CD4-positive, alpha-beta memory T cell (primary cell): ENCODE measurements at regions of chr2 and their contacts with region 1.

Region 1: DNA sequence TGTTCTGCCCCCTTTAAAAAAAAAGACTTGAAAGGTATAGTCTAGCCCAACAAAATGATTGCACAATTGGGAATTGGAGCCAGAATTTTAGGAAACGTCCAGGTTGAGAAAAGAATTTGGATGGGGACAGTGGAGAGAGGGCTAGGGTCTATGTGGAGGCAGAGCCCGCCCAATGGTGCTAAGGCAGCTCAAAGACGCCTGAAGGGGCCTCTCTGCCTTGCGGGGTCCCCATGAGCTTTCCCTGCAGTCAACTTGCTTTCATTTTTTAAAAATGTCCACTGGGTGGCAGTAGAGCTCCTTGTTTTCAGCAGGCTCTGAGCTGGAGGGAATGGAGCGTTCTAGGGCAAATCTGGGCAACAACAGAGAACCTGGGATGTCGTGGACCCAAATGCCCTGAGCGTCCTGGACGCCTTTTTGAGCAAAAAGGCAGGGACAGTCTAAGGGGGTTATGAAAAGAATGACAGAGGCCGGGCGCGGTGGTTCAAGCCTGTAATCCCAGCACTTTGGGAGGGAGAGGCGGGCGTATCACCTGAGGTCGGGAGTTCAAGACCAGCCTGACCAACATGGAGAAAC is 40.2 kb upstream of the ITM2C start:
- DNase-seq: peak; percentile 60 to 74 (median 71)
- H3K4me3 ChIP-seq: no peak overlapping the region
- H3K4me3 Mint-ChIP-seq: peak overlapping the region in 7 of 8 donors; percentile 35 to 69 (median 60)
- H3K27ac ChIP-seq: no peak overlapping the region
- H3K27ac Mint-ChIP-seq: peak overlapping the region in 1 of 7 donors; percentile 68
- H3K4me1 ChIP-seq: peaks cover 16% of the 10 kb centered on the region
- H3K4me1 Mint-ChIP-seq: peaks cover 2 to 13% (median 8%) of the 10 kb centered on the region in 4 donors
- H3K27me3 ChIP-seq: no peaks in the 10 kb centered on the region
- H3K27me3 Mint-ChIP-seq: peaks cover 22 to 23% of the 10 kb centered on the region in 2 donors

Region 2: GRCh38 chr2:230781130-230781797 is 43.2 kb before region 1 on chr2:
- CTCF ChIA-PET with region 1: interaction called, 13 read pairs
- POLR2A ChIA-PET with region 1: no interaction called
- intact Hi-C with region 1: no loop called
- DNase-seq: peak; percentile 59 to 83 (median 64)
- H3K4me3 ChIP-seq: no peak overlapping the region
- H3K4me3 Mint-ChIP-seq: peak overlapping the region in 6 of 8 donors; percentile 13 to 60 (median 34)
- H3K27ac ChIP-seq: peak overlapping the region; percentile 33
- H3K27ac Mint-ChIP-seq: peak overlapping the region; percentile 14 to 93 (median 64)
- H3K4me1 ChIP-seq: peaks cover 78% of the 10 kb centered on the region
- H3K4me1 Mint-ChIP-seq: peaks cover 60 to 81% (median 72%) of the 10 kb centered on the region in 4 donors
- H3K27me3 ChIP-seq: no peaks in the 10 kb centered on the region
- H3K27me3 Mint-ChIP-seq: no peaks in the 10 kb centered on the region

Region 3: DNA sequence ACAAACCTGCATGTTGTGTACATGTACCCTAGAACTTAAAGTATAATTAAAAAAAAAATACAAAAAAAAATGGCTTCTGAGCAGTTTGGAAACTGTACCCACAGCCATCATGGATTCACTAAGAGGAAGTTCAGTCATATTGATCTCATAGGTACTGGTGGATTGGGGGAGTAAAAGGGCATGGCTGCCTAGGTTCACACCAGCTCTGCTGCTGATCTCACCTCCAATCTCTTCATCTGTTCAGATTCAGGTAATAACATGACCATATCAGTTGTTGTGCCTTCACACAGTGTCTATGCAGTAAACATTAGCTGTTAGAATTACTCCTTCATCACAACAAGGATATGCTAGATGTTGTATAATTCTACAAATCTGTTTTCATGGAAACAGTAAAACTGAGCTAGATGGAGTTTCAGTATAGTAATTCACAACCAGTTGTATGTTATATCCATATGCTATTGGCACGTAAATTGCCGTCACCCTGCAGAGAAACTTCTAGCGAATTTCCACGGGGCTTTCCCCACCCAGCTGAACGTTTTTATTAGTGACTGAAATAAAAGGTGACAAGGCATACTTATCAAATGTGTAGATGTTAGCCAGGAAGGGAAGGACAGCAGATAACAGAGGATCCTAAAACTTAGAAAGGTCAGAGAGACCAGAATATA is 19.0 kb before region 1 on chr2:
- CTCF ChIA-PET with region 1: interaction called, 10 read pairs
- POLR2A ChIA-PET with region 1: interaction called, 3 read pairs
- intact Hi-C with region 1: no loop called
- DNase-seq: no peak
- H3K4me3 ChIP-seq: no peak overlapping the region
- H3K4me3 Mint-ChIP-seq: no peak overlapping the region
- H3K27ac ChIP-seq: no peak overlapping the region
- H3K27ac Mint-ChIP-seq: peak overlapping the region in 5 of 7 donors; percentile 1 to 80 (median 53)
- H3K4me1 ChIP-seq: no peaks in the 10 kb centered on the region
- H3K4me1 Mint-ChIP-seq: peaks cover 4 to 14% (median 11%) of the 10 kb centered on the region in 4 donors
- H3K27me3 ChIP-seq: no peaks in the 10 kb centered on the region
- H3K27me3 Mint-ChIP-seq: no peaks in the 10 kb centered on the region

Region 4: DNA sequence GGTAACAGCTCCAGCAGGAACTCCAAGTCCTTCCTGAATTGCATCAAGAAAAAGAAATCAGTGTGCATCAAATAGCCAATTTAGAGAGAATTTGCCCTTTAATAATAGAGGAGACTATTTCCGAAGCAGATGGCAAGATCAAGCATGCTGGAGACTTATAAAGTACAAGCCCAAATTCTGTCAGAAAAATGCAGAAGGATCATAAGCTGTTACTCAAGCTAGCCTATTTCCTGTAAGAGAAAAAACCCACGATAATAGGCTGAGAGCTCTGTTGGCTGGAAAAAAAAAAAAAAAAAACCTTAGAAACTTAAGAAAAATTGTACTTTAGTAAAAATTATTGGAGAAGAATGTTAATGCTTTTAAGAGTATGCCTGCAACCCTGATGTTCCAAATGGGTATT is 15.8 kb after region 1 on chr2:
- CTCF ChIA-PET with region 1: interaction called, 15 read pairs
- POLR2A ChIA-PET with region 1: no interaction called
- intact Hi-C with region 1: no loop called
- DNase-seq: no peak
- H3K4me3 ChIP-seq: no peak overlapping the region
- H3K4me3 Mint-ChIP-seq: no peak overlapping the region
- H3K27ac ChIP-seq: no peak overlapping the region
- H3K27ac Mint-ChIP-seq: no peak overlapping the region
- H3K4me1 ChIP-seq: no peaks in the 10 kb centered on the region
- H3K4me1 Mint-ChIP-seq: no peaks in the 10 kb centered on the region
- H3K27me3 ChIP-seq: no peaks in the 10 kb centered on the region
- H3K27me3 Mint-ChIP-seq: peaks cover 3 to 12% of the 10 kb centered on the region in 2 donors

Region 5: GRCh38 chr2:230847883-230848388 is 23.4 kb after region 1 on chr2:
- CTCF ChIA-PET with region 1: interaction called, 80 read pairs
- POLR2A ChIA-PET with region 1: interaction called, 3 read pairs
- intact Hi-C with region 1: no loop called
- DNase-seq: peak; percentile 74 to 82 (median 76)
- H3K4me3 ChIP-seq: no peak overlapping the region
- H3K4me3 Mint-ChIP-seq: peak overlapping the region in 6 of 8 donors; percentile 36 to 79 (median 50)
- H3K27ac ChIP-seq: no peak overlapping the region
- H3K27ac Mint-ChIP-seq: peak overlapping the region in 2 of 7 donors; percentile 27
- H3K4me1 ChIP-seq: peaks cover 8% of the 10 kb centered on the region
- H3K4me1 Mint-ChIP-seq: peaks cover 5 to 10% (median 7%) of the 10 kb centered on the region in 4 donors
- H3K27me3 ChIP-seq: no peaks in the 10 kb centered on the region
- H3K27me3 Mint-ChIP-seq: peaks cover 19 to 20% of the 10 kb centered on the region in 2 donors

Region 6: DNA sequence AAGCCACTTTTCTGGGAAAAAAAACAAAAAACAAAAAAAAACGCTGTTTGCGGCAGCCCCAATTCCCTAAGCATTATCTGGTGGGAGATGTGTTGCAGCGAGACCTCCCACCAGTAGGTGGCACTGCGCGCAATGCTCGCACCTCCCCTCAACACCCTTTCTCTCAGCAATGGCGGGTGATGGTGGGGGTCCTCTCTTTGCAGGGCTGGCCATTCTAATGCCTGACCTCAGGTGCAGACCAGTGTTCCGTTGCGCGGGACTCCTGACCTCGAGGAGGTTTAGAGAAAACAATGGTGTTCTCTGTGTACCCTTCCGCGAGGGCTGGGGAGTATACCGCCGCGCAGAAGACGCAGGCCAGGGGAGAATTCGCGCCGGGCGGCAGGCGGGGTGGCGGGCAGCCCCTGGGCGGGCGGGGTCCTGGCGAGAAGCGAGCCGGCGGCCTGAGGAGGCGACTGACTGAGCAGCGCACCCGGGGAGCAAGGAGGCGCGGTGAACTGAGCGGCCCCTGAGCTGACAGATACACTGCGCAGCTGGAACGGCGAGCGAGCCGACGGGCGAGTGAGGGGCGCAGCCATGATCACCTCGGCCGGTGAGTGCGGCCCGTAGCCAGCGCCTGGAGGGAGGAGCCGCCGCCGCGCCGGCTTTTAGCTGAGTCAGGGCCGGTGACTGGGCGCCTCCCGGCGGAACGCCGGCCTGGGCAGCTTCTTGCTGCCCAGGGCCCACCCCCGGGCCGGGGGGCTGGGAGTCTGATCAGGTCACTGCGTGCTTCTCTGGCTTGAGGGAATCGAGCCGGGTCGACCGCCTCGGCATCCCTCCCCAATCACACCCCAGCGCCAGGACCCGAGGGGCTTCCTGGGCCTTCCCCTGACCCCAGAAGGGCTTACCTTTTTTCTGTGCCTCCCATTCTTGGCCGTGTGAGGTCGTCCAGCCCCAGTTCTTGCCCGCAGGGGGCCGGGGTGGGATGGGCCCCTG is 232.2 kb after region 1 on chr2 and contains the start of gene PSMD1:
- CTCF ChIA-PET with region 1: interaction called, 11 read pairs
- POLR2A ChIA-PET with region 1: no interaction called
- intact Hi-C with region 1: loop called (anchors 1 kb)
- DNase-seq: peak; percentile 95 to 98 (median 96)
- H3K4me3 ChIP-seq: peak within 1 kb of the TSS; percentile 70 to 87
- H3K4me3 Mint-ChIP-seq: peak within 1 kb of the TSS; percentile 98 to 100 (median 99)
- H3K27ac ChIP-seq: peak within 1 kb of the TSS; percentile 85
- H3K27ac Mint-ChIP-seq: peak within 1 kb of the TSS; percentile 99 to 100 (median 100)
- H3K4me1 ChIP-seq: peaks cover 35% of the 10 kb centered on the region
- H3K4me1 Mint-ChIP-seq: peaks cover 31 to 66% (median 49%) of the 10 kb centered on the region in 4 donors
- H3K27me3 ChIP-seq: no peaks in the 10 kb centered on the region
- H3K27me3 Mint-ChIP-seq: peaks cover 0 to 5% of the 10 kb centered on the region in 2 donors
- total RNA-seq, gene PSMD1: 38.0 to 40.8 TPM